ENCODE measurements at regions of chr11 and their contacts with region 1.

Region 1: GRCh38 chr11:120517390-120517761 is 5.8 kb downstream of the GRIK4 start:
- DNase-seq: peak in 1 of 3 donors; percentile 7
- ATAC-seq: no peak
- H3K4me3 ChIP-seq: no peak overlapping the region
- H3K27ac ChIP-seq: no peak overlapping the region
- H3K4me1 ChIP-seq: no peaks in the 10 kb centered on the region
- H3K27me3 ChIP-seq: no peaks in the 10 kb centered on the region
- CTCF ChIP-seq: no peak
- POLR2A ChIP-seq: no peak

Region 2: GRCh38 chr11:120682866-120683265 is 165.5 kb after region 1 on chr11:
- intact Hi-C with region 1: loop called (anchors 5 kb)
- DNase-seq: no peak
- ATAC-seq: no peak
- H3K4me3 ChIP-seq: no peak overlapping the region
- H3K27ac ChIP-seq: no peak overlapping the region
- H3K4me1 ChIP-seq: no peaks in the 10 kb centered on the region
- H3K27me3 ChIP-seq: no peaks in the 10 kb centered on the region
- CTCF ChIP-seq: no peak
- POLR2A ChIP-seq: no peak

Region 3: DNA sequence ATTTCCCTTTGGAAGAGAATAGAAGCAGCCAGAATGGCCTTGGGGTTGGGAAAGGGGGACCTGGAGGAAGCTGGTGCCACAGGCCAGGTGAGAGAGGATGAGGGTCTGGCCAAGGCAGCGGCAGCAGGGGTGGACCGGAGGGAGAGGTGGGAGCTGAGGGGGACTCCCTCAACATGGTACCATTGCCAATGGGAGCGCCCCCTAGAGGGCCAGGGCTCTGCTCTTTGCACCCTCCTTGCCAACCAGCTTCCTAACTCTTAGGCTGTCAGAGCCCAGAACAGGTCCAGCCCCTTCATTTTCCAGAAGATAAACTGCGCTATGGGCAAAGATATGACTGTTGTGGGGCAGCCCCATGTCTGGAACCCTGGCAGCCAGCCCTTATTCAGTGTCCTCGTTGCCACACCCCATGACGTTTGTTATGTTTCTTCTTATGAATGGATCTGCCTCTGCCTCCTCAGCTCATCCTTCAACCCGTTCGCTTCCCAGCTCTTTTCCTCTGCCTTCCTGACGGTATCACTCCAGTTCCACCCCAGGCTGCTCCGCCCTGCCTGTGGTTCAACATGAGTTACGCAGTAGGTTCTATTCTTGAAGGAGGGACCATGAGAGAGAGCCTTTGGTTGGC is 179.3 kb after region 1 on chr11:
- intact Hi-C with region 1: no loop called
- DNase-seq: no peak
- ATAC-seq: no peak
- H3K4me3 ChIP-seq: no peak overlapping the region
- H3K27ac ChIP-seq: no peak overlapping the region
- H3K4me1 ChIP-seq: no peaks in the 10 kb centered on the region
- H3K27me3 ChIP-seq: no peaks in the 10 kb centered on the region
- CTCF ChIP-seq: no peak
- POLR2A ChIP-seq: no peak